ENCODE measurements at regions of chr18 and their contacts with region 1.

Region 1: GRCh38 chr18:46814399-46814798 is 57.5 kb upstream of the ST8SIA5 start:
- DNase-seq: no peak
- H3K4me3 ChIP-seq: no peak overlapping the region
- H3K27ac ChIP-seq: no peak overlapping the region
- H3K4me1 ChIP-seq: no peaks in the 10 kb centered on the region
- H3K27me3 ChIP-seq: no peaks in the 10 kb centered on the region
- CTCF ChIP-seq: no peak
- POLR2A ChIP-seq: no peak

Region 2: DNA sequence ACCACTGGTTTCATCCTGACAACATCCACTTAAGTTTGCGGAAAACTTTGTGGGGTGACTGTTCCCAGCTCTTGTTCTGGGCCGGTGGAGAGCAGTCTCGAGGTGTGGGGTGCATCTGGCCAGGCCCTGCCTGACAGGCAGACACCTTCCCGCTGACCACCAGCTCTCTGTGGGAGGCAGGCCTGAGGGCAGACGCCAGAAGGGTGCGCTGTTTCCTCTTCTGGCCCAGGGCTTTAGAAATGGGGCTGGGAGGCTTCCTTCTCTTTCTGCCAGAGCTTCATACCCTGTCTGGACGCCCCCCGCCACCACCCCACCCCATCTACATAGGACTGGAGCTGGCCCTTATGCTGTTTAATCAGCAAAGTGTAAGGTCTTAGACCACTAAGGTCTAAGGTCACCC is 421.2 kb before region 1 on chr18:
- intact Hi-C with region 1: loop called (anchors 10 kb)
- DNase-seq: no peak
- H3K4me3 ChIP-seq: no peak overlapping the region
- H3K27ac ChIP-seq: no peak overlapping the region
- H3K4me1 ChIP-seq: no peaks in the 10 kb centered on the region
- H3K27me3 ChIP-seq: no peaks in the 10 kb centered on the region
- CTCF ChIP-seq: no peak
- POLR2A ChIP-seq: no peak